Activated CD8-positive, alpha-beta T cell treated with anti-CD3 and anti-CD28 coated beads for 36 hours (primary cell): ENCODE measurements at regions of chr1 and their contacts with region 1.

Region 1: GRCh38 chr1:234373064-234373958 is at the start of gene COA6:
- DNase-seq: peak; percentile 95
- ATAC-seq: peak; percentile 87
- H3K4me3 Mint-ChIP-seq: peak within 1 kb of the TSS; percentile 98
- H3K27ac Mint-ChIP-seq: peak within 1 kb of the TSS; percentile 99
- H3K4me1 Mint-ChIP-seq: peaks cover 43% of the 10 kb centered on the region
- H3K27me3 Mint-ChIP-seq: no peaks in the 10 kb centered on the region
- CTCF ChIP-seq: no peak
- total RNA-seq, gene COA6: 59.8 to 61.8 TPM

Region 2: DNA sequence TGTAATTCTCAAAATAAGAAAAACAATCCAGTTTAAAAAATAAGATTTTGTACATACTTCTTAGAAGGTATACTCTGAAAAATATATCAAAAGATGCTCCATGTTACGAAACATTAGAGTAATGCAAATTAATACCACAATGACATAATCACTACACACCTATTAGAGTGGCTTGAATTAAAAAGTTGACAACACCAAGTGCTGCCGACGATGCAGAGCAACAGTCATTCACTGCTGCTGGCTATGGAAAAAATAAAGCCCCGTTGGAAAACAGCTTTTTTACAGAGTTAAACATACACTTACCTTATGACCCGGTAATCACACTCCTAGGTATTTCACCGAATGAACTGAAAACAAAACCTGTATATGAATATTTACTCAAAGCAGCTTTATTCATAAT is 14.8 kb after region 1 on chr1:
- CTCF ChIA-PET with region 1: no interaction called
- POLR2A ChIA-PET with region 1: interaction called, 10 read pairs
- intact Hi-C with region 1: no loop called
- DNase-seq: no peak
- ATAC-seq: no peak
- H3K4me3 Mint-ChIP-seq: no peak overlapping the region
- H3K27ac Mint-ChIP-seq: no peak overlapping the region
- H3K4me1 Mint-ChIP-seq: peaks cover 7% of the 10 kb centered on the region
- H3K27me3 Mint-ChIP-seq: no peaks in the 10 kb centered on the region
- CTCF ChIP-seq: no peak